CD4-positive, alpha-beta memory T cell (primary cell): ENCODE measurements at regions of chr1 and their contacts with region 1.

Region 1: GRCh38 chr1:193019442-193020026 is 39.6 kb downstream of the UCHL5 start:
- DNase-seq: peak in 4 of 5 donors; percentile 39 to 45 (median 42)
- H3K4me3 ChIP-seq: no peak overlapping the region
- H3K4me3 Mint-ChIP-seq: no peak overlapping the region
- H3K27ac ChIP-seq: no peak overlapping the region
- H3K27ac Mint-ChIP-seq: no peak overlapping the region
- H3K4me1 ChIP-seq: no peaks in the 10 kb centered on the region
- H3K4me1 Mint-ChIP-seq: no peaks in the 10 kb centered on the region
- H3K27me3 ChIP-seq: no peaks in the 10 kb centered on the region
- H3K27me3 Mint-ChIP-seq: no peaks in the 10 kb centered on the region

Region 2: DNA sequence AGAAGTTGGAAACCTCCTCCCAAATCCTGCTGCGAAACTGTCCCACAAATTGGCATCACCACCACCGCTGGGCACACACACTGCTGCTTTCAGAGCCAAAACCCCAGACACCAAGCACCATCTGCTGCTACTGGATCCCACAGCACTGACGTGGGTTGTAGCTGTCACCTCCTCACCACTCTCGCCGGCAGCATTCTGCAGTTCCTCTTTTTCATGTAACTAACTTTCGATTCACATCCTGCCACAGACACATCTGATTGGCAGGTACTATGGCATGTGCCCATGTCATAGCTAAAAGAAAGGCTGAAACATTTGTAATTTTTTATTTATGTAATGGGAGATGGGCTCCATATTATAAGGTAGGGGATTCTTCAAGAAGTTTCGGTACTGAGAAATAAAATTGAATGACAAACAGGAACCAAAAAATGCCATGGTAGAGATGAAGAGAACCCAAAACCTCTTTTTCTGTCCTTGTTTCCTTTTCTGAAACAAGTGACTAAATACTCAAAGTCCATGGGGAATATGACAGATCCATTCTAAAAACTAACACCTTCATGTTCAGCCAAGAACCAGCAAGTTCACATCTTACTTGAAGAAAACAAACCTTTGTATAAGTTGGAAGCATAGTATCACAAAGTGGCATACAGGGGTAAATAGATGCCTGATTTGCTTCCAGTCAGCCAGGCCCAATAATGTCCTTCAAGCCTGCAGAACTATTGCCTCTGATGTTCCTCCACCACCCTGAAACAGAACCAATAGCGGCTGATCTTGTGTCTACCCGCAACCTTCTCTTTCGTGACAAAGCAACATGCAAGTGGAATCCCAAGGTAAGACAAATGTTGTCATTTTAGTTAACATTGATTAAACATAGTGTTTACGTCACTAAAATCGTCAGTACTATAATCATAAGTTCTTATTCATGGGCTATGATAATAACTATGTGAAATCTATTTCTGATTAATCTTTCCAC is 410.1 kb before region 1 on chr1:
- CTCF ChIA-PET with region 1: interaction called, 3 read pairs
- POLR2A ChIA-PET with region 1: no interaction called
- intact Hi-C with region 1: loop called (anchors 10 kb)
- DNase-seq: peak; percentile 55 to 79 (median 71)
- H3K4me3 ChIP-seq: no peak overlapping the region
- H3K4me3 Mint-ChIP-seq: peak overlapping the region; percentile 33 to 76 (median 66)
- H3K27ac ChIP-seq: peak overlapping the region; percentile 0
- H3K27ac Mint-ChIP-seq: peak overlapping the region; percentile 6 to 90 (median 85)
- H3K4me1 ChIP-seq: peaks cover 15% of the 10 kb centered on the region
- H3K4me1 Mint-ChIP-seq: peaks cover 12 to 18% (median 15%) of the 10 kb centered on the region in 4 donors
- H3K27me3 ChIP-seq: no peaks in the 10 kb centered on the region
- H3K27me3 Mint-ChIP-seq: no peaks in the 10 kb centered on the region

Region 3: GRCh38 chr1:192713921-192714320 is 305.6 kb before region 1 on chr1:
- CTCF ChIA-PET with region 1: no interaction called
- POLR2A ChIA-PET with region 1: no interaction called
- intact Hi-C with region 1: no loop called
- DNase-seq: no peak
- H3K4me3 ChIP-seq: no peak overlapping the region
- H3K4me3 Mint-ChIP-seq: no peak overlapping the region
- H3K27ac ChIP-seq: no peak overlapping the region
- H3K27ac Mint-ChIP-seq: no peak overlapping the region
- H3K4me1 ChIP-seq: no peaks in the 10 kb centered on the region
- H3K4me1 Mint-ChIP-seq: no peaks in the 10 kb centered on the region
- H3K27me3 ChIP-seq: no peaks in the 10 kb centered on the region
- H3K27me3 Mint-ChIP-seq: peaks cover 0 to 2% of the 10 kb centered on the region in 2 donors